CD4-positive, alpha-beta memory T cell (primary cell): ENCODE measurements at regions of chr16 and their contacts with region 1.

Region 1: DNA sequence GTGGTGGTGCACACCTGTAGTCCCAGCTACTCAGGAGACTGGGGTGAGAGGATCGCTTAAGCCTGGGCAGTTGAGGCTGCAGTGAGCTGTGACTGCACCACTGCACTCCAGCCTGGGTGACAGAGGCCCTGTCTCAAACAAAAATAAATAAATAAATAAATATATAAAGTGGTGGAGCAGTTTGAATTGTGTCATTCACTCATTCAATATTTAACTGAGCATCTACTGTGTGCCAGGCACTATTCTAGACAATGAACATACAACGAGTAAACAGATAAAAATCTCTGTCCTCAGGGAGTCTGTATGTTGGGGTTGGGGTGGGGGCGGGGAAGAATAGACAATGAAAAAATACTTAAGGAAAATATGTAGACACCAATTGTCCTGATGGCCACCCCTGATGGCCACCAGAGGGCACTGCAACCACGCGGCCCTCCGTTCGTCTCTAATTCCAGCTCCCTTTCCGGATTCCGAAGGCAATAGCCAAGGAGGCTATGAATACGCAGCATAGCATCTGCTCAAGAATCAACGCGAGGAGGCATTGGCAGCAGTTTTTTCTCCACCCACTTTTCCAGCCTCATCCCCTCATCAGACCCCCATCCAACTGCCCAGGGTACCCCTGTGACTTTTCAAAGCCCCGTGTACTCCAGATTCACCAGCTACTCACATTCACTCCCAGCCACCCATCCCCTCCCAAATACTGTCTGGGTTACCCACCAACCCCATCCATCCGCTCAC is 21.4 kb downstream of the QPRT start:
- DNase-seq: peak; percentile 78 to 79 (median 79)
- H3K4me3 ChIP-seq: peak overlapping the region in 1 of 2 donors; percentile 11
- H3K4me3 Mint-ChIP-seq: peak overlapping the region; percentile 75 to 87 (median 80)
- H3K27ac ChIP-seq: peak overlapping the region; percentile 61
- H3K27ac Mint-ChIP-seq: peak overlapping the region; percentile 95 to 100 (median 98)
- H3K4me1 ChIP-seq: peaks cover 34% of the 10 kb centered on the region
- H3K4me1 Mint-ChIP-seq: peaks cover 25 to 37% (median 31%) of the 10 kb centered on the region in 4 donors
- H3K27me3 ChIP-seq: no peaks in the 10 kb centered on the region
- H3K27me3 Mint-ChIP-seq: no peaks in the 10 kb centered on the region

Region 2: DNA sequence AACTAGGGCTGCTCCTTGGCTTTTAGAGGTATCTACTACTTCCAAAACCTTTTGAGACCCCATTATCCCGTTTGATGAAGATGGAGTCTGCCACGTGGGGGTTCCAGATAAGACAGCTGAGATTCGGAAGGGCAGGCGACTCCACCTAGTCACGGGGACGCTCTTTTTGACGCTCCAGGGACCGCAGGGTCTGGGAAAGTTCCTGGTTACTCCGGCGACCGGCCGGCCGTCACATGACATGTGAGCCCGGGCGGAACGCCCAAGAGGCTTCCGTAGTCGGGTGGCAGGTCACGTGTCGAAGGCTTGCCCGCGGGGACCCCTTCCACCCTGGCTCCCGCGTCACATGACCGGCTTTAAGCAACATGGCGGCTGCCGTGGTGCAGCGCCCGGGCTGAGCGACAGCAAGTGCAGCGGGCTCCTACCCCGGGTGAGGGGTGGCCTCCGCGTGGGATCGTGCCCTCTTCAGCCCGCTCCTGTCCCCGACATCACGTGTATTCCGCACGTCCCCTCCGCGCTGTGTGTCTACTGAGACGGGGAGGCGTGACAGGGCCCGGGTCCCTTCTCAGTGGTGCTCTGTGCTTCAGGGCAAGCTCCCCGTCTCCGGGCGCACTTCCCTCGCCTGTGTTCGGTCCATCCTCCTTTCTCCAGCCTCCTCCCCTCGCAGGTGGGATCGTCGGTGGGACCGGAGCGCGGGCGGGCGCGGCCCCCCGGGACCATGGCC is 725.8 kb before region 1 on chr16 and contains the start of gene SPNS1:
- CTCF ChIA-PET with region 1: no interaction called
- POLR2A ChIA-PET with region 1: no interaction called
- intact Hi-C with region 1: no loop called
- DNase-seq: peak; percentile 84 to 90 (median 86)
- H3K4me3 ChIP-seq: peak within 1 kb of the TSS; percentile 65 to 91
- H3K4me3 Mint-ChIP-seq: peak within 1 kb of the TSS; percentile 97 to 99 (median 98)
- H3K27ac ChIP-seq: peak within 1 kb of the TSS; percentile 71
- H3K27ac Mint-ChIP-seq: peak within 1 kb of the TSS; percentile 93 to 99 (median 97)
- H3K4me1 ChIP-seq: peaks cover 32% of the 10 kb centered on the region
- H3K4me1 Mint-ChIP-seq: peaks cover 29 to 45% (median 36%) of the 10 kb centered on the region in 4 donors
- H3K27me3 ChIP-seq: no peaks in the 10 kb centered on the region
- H3K27me3 Mint-ChIP-seq: no peaks in the 10 kb centered on the region
- total RNA-seq, gene SPNS1: 31.0 to 34.4 TPM

Region 3: GRCh38 chr16:29720699-29721098 is 20.3 kb after region 1 on chr16:
- CTCF ChIA-PET with region 1: interaction called, 172 read pairs
- POLR2A ChIA-PET with region 1: interaction called, 13 read pairs
- intact Hi-C with region 1: loop called (anchors 1 kb)
- DNase-seq: no peak
- H3K4me3 ChIP-seq: no peak overlapping the region
- H3K4me3 Mint-ChIP-seq: no peak overlapping the region
- H3K27ac ChIP-seq: no peak overlapping the region
- H3K27ac Mint-ChIP-seq: no peak overlapping the region
- H3K4me1 ChIP-seq: no peaks in the 10 kb centered on the region
- H3K4me1 Mint-ChIP-seq: peaks cover 10 to 14% (median 10%) of the 10 kb centered on the region in 4 donors
- H3K27me3 ChIP-seq: no peaks in the 10 kb centered on the region
- H3K27me3 Mint-ChIP-seq: no peaks in the 10 kb centered on the region

Region 4: GRCh38 chr16:29745853-29746345 is 45.5 kb after region 1 on chr16 and contains the start of gene C16orf54:
- CTCF ChIA-PET with region 1: interaction called, 21 read pairs
- POLR2A ChIA-PET with region 1: interaction called, 122 read pairs
- intact Hi-C with region 1: loop called (anchors 1 kb)
- DNase-seq: peak; percentile 98 to 99 (median 98)
- H3K4me3 ChIP-seq: peak within 1 kb of the TSS; percentile 67 to 93
- H3K4me3 Mint-ChIP-seq: peak within 1 kb of the TSS; percentile 96 to 100 (median 99)
- H3K27ac ChIP-seq: peak within 1 kb of the TSS; percentile 94
- H3K27ac Mint-ChIP-seq: peak within 1 kb of the TSS; percentile 98 to 100 (median 100)
- H3K4me1 ChIP-seq: peaks cover 78% of the 10 kb centered on the region
- H3K4me1 Mint-ChIP-seq: peaks cover 39 to 79% (median 54%) of the 10 kb centered on the region in 4 donors
- H3K27me3 ChIP-seq: no peaks in the 10 kb centered on the region
- H3K27me3 Mint-ChIP-seq: peaks cover 0 to 2% of the 10 kb centered on the region in 2 donors
- total RNA-seq, gene C16orf54: 139 to 143 TPM

Region 5: GRCh38 chr16:29790183-29790952 is 89.9 kb after region 1 on chr16 and contains the start of gene KIF22:
- CTCF ChIA-PET with region 1: interaction called, 59 read pairs
- POLR2A ChIA-PET with region 1: interaction called, 119 read pairs
- intact Hi-C with region 1: loop called (anchors 1 kb)
- DNase-seq: peak; percentile 99 to 100 (median 100)
- H3K4me3 ChIP-seq: peak within 1 kb of the TSS; percentile 90 to 98
- H3K4me3 Mint-ChIP-seq: peak within 1 kb of the TSS; percentile 97 to 100 (median 99)
- H3K27ac ChIP-seq: peak within 1 kb of the TSS; percentile 80
- H3K27ac Mint-ChIP-seq: peak within 1 kb of the TSS; percentile 96 to 99 (median 98)
- H3K4me1 ChIP-seq: peaks cover 43% of the 10 kb centered on the region
- H3K4me1 Mint-ChIP-seq: peaks cover 27 to 58% (median 43%) of the 10 kb centered on the region in 4 donors
- H3K27me3 ChIP-seq: no peaks in the 10 kb centered on the region
- H3K27me3 Mint-ChIP-seq: no peaks in the 10 kb centered on the region
- total RNA-seq, gene KIF22: 89.4 to 98.6 TPM

Region 6: GRCh38 chr16:29848420-29849297 is 148.2 kb after region 1 on chr16:
- CTCF ChIA-PET with region 1: interaction called, 134 read pairs
- POLR2A ChIA-PET with region 1: interaction called, 54 read pairs
- intact Hi-C with region 1: loop called (anchors 1 kb)
- DNase-seq: peak; percentile 79 to 83 (median 80)
- H3K4me3 ChIP-seq: no peak overlapping the region
- H3K4me3 Mint-ChIP-seq: no peak overlapping the region
- H3K27ac ChIP-seq: no peak overlapping the region
- H3K27ac Mint-ChIP-seq: peak overlapping the region; percentile 13 to 89 (median 60)
- H3K4me1 ChIP-seq: peaks cover 6% of the 10 kb centered on the region
- H3K4me1 Mint-ChIP-seq: peaks cover 1 to 7% (median 4%) of the 10 kb centered on the region in 4 donors
- H3K27me3 ChIP-seq: no peaks in the 10 kb centered on the region
- H3K27me3 Mint-ChIP-seq: no peaks in the 10 kb centered on the region

Region 7: GRCh38 chr16:30018731-30019158 is 318.3 kb after region 1 on chr16:
- CTCF ChIA-PET with region 1: interaction called, 11 read pairs
- POLR2A ChIA-PET with region 1: no interaction called
- intact Hi-C with region 1: loop called (anchors 1 kb)
- DNase-seq: no peak
- H3K4me3 ChIP-seq: no peak overlapping the region
- H3K4me3 Mint-ChIP-seq: peak overlapping the region in 2 of 8 donors; percentile 1 to 56
- H3K27ac ChIP-seq: no peak overlapping the region
- H3K27ac Mint-ChIP-seq: peak overlapping the region in 1 of 7 donors; percentile 28
- H3K4me1 ChIP-seq: peaks cover 9% of the 10 kb centered on the region
- H3K4me1 Mint-ChIP-seq: peaks cover 4 to 13% (median 7%) of the 10 kb centered on the region in 4 donors
- H3K27me3 ChIP-seq: no peaks in the 10 kb centered on the region
- H3K27me3 Mint-ChIP-seq: no peaks in the 10 kb centered on the region